Aorta (tissue), 5 donors: ENCODE measurements at regions of chr2 and their contacts with region 1.

Region 1: DNA sequence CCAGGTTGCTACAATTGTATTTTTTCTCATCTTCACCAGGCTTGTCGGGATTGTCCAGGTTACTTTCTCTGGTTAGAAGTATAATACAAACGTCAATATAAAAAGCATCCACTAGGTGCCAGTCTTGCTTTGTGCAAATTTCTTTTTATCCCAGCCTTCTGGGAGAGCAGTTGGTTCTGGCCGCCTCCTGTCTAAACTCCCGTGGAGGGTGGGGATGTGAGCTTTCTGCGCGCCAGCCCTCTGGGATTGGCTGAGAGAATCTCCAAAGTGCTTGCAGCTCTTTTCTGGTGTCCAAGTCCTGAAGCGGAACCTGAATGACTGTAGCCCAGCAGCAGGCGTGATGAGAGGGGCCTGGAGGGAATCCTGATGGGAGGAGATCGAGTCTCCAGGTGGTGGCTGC is 22.4 kb upstream of the TOGARAM2 start:
- DNase-seq: peak in 1 of 2 donors; percentile 66
- ATAC-seq: peak; percentile 80
- H3K4me3 ChIP-seq: no peak overlapping the region
- H3K27ac ChIP-seq: no peak overlapping the region
- H3K4me1 ChIP-seq: no peaks in the 10 kb centered on the region
- H3K27me3 ChIP-seq: no peaks in the 10 kb centered on the region

Region 2: GRCh38 chr2:29155578-29155977 is 196.9 kb after region 1 on chr2:
- intact Hi-C with region 1: no loop called
- DNase-seq: no peak
- ATAC-seq: no peak
- H3K4me3 ChIP-seq: no peak overlapping the region
- H3K27ac ChIP-seq: no peak overlapping the region
- H3K4me1 ChIP-seq: no peaks in the 10 kb centered on the region
- H3K27me3 ChIP-seq: no peaks in the 10 kb centered on the region

Region 3: GRCh38 chr2:29196792-29197788 is 238.4 kb after region 1 on chr2:
- intact Hi-C with region 1: loop called (anchors 1 to 2 kb)
- DNase-seq: peak; percentile 70 to 83
- ATAC-seq: peak; percentile 73
- H3K4me3 ChIP-seq: no peak overlapping the region
- H3K27ac ChIP-seq: no peak overlapping the region
- H3K4me1 ChIP-seq: no peaks in the 10 kb centered on the region
- H3K27me3 ChIP-seq: no peaks in the 10 kb centered on the region

Region 4: DNA sequence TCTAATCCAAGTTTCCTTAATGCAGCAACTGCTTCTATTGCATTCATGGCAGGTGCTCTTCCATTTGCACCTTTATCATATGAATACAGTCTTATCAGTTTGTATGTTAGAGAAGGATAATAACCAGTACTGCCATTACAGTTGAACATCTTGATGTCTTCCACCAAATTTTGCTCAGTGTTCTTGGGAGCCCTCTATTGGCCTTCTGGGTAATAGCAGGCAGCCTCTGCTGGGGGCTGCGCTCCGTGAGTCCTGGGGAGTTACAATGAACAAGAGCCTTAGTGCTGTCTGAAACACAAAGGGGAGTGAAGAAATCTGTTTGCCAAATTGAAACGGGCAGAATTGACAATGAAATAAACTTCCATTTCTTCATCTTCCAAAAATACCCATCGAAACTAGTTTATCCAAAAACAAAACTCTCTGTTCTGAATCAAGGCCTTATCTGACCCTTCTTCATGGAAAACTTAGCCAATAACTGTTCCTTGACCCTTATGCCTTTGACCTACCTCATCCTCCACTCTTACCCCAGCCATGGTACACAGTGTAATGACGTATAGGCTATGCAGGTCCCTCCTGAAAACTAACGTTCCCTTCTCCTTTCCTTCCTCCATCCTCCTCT is 882.8 kb after region 1 on chr2:
- intact Hi-C with region 1: loop called in 1 of 2 experiments (anchors 2 kb)
- DNase-seq: no peak
- ATAC-seq: no peak
- H3K4me3 ChIP-seq: no peak overlapping the region
- H3K27ac ChIP-seq: no peak overlapping the region
- H3K4me1 ChIP-seq: peaks cover 0 to 2% of the 10 kb centered on the region in 2 donors
- H3K27me3 ChIP-seq: no peaks in the 10 kb centered on the region

Region 5: DNA sequence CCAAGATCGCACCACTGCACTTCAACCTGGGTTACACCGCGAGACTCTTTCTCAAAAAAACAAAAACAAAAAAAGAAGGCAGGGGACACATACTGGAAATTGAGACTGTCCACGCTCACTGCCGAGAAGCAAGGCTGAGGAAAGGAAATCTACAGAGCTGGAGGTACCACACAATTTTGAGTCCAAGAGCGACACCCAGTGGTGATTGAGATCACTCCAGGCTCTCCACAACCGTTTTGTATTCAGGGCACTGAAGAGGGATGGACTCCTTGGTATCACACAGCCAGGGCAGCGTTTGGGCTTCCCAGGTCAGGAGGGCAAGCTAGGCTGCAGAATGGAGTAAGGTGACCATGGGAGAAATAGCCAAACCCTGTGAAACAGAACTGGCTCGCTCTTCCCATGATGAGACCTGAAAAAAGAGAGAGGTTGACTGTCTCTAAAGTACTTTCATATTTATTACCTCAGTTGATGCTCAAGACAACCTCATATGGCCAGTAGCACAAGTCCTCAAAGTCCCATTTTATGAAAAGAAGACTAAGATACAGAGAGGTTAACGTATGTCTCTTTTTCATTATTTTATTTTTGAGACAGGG is 1113.7 kb after region 1 on chr2:
- intact Hi-C with region 1: loop called in 1 of 2 experiments (anchors 10 kb)
- DNase-seq: peak in 1 of 2 donors; percentile 59
- ATAC-seq: peak; percentile 74
- H3K4me3 ChIP-seq: no peak overlapping the region
- H3K27ac ChIP-seq: no peak overlapping the region
- H3K4me1 ChIP-seq: no peaks in the 10 kb centered on the region
- H3K27me3 ChIP-seq: peaks cover 0 to 2% of the 10 kb centered on the region in 2 donors